CD4-positive, alpha-beta memory T cell (primary cell): ENCODE measurements at regions of chr14 and their contacts with region 1.

Region 1: DNA sequence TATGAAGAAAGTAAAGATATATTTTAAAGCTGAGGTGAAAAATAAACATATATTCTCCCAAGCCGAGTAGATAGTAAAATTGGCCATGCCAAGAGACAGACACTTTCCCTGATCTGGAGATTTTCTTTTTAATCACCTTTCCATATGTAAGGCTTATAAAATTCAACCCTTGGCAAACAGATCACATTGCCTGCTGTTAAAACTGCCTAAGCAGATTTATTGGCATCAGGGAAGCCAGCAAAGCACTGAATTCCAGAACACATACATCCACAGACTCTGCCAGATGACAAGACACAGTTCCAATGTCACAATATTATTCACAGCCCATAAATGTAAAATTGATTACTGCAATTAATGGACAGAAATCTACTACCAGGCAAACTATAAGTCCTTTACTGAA is 78.2 kb upstream of the GARIN2 start:
- DNase-seq: no peak
- H3K4me3 ChIP-seq: no peak overlapping the region
- H3K4me3 Mint-ChIP-seq: no peak overlapping the region
- H3K27ac ChIP-seq: no peak overlapping the region
- H3K27ac Mint-ChIP-seq: no peak overlapping the region
- H3K4me1 ChIP-seq: no peaks in the 10 kb centered on the region
- H3K4me1 Mint-ChIP-seq: no peaks in the 10 kb centered on the region
- H3K27me3 ChIP-seq: no peaks in the 10 kb centered on the region
- H3K27me3 Mint-ChIP-seq: no peaks in the 10 kb centered on the region

Region 2: GRCh38 chr14:66624299-66624937 is 486.6 kb before region 1 on chr14:
- CTCF ChIA-PET with region 1: no interaction called
- POLR2A ChIA-PET with region 1: no interaction called
- intact Hi-C with region 1: loop called (anchors 2 kb)
- DNase-seq: peak in 4 of 5 donors; percentile 8 to 14 (median 12)
- H3K4me3 ChIP-seq: no peak overlapping the region
- H3K4me3 Mint-ChIP-seq: no peak overlapping the region
- H3K27ac ChIP-seq: no peak overlapping the region
- H3K27ac Mint-ChIP-seq: no peak overlapping the region
- H3K4me1 ChIP-seq: no peaks in the 10 kb centered on the region
- H3K4me1 Mint-ChIP-seq: peaks cover 10 to 16% (median 13%) of the 10 kb centered on the region in 4 donors
- H3K27me3 ChIP-seq: no peaks in the 10 kb centered on the region
- H3K27me3 Mint-ChIP-seq: no peaks in the 10 kb centered on the region